Cardiac septum (tissue), 1 donor: ENCODE measurements at regions of chr3 and their contacts with region 1.

Region 1: DNA sequence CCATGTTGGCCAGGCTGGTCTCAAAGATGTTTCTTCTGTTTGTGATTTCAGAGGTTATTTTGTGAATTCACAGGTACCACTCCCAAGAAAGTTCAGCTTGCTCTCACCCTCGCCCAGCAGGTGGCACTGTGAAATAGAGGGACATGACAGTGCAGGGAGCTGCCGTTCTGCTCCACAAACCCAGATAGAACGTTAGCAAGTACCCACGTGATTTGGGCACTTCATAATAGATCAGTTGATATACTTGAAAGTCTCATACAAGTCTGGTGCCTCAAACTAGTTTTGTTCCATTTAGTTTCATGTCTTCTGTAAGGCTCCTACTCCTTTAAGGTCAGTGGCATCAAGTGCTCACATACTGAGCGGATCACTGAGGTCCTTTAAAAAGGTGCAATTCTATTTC is 45.5 kb downstream of the FILIP1L start:
- DNase-seq: peak; percentile 90

Region 2: GRCh38 chr3:100001521-100002270 is 67.1 kb before region 1 on chr3:
- intact Hi-C with region 1: no loop called
- DNase-seq: no peak

Region 3: GRCh38 chr3:100254168-100254777 is 185.4 kb after region 1 on chr3:
- intact Hi-C with region 1: loop called (anchors 1 kb)
- DNase-seq: no peak